Posterior vena cava (tissue), 2 donors: ENCODE measurements at regions of chr17 and their contacts with region 1.

Region 1: GRCh38 chr17:27628376-27628775 is 2.6 kb upstream of the LGALS9 start:
- DNase-seq: no peak

Region 2: GRCh38 chr17:27793168-27793905 is 165.0 kb after region 1 on chr17:
- intact Hi-C with region 1: no loop called
- DNase-seq: no peak

Region 3: GRCh38 chr17:28567604-28568003 is 939.2 kb after region 1 on chr17:
- intact Hi-C with region 1: loop called in 1 of 2 experiments (anchors 5 kb)
- DNase-seq: no peak